Adrenal gland (tissue), 19 donors: ENCODE measurements at regions of chr20 and their contacts with region 1.

Region 1: GRCh38 chr20:9903048-9903655 is 64.3 kb upstream of the PAK5 start:
- DNase-seq: peak in 1 of 7 donors; percentile 6
- H3K4me3 ChIP-seq: no peak overlapping the region
- H3K27ac ChIP-seq: no peak overlapping the region
- H3K4me1 ChIP-seq: no peaks in the 10 kb centered on the region
- H3K27me3 ChIP-seq: no peaks in the 10 kb centered on the region
- CTCF ChIP-seq: peak in 3 of 6 experiments; percentile 6 to 27 (median 12)
- POLR2A ChIP-seq: no peak

Region 2: GRCh38 chr20:9407805-9408421 is 495.2 kb before region 1 on chr20:
- intact Hi-C with region 1: loop called in 1 of 2 experiments (anchors 10 kb)
- DNase-seq: peak; percentile 43 to 88 (median 68)
- H3K4me3 ChIP-seq: no peak overlapping the region
- H3K27ac ChIP-seq: no peak overlapping the region
- H3K4me1 ChIP-seq: no peaks in the 10 kb centered on the region
- H3K27me3 ChIP-seq: no peaks in the 10 kb centered on the region
- CTCF ChIP-seq: peak; percentile 86 to 92 (median 90)
- POLR2A ChIP-seq: no peak

Region 3: DNA sequence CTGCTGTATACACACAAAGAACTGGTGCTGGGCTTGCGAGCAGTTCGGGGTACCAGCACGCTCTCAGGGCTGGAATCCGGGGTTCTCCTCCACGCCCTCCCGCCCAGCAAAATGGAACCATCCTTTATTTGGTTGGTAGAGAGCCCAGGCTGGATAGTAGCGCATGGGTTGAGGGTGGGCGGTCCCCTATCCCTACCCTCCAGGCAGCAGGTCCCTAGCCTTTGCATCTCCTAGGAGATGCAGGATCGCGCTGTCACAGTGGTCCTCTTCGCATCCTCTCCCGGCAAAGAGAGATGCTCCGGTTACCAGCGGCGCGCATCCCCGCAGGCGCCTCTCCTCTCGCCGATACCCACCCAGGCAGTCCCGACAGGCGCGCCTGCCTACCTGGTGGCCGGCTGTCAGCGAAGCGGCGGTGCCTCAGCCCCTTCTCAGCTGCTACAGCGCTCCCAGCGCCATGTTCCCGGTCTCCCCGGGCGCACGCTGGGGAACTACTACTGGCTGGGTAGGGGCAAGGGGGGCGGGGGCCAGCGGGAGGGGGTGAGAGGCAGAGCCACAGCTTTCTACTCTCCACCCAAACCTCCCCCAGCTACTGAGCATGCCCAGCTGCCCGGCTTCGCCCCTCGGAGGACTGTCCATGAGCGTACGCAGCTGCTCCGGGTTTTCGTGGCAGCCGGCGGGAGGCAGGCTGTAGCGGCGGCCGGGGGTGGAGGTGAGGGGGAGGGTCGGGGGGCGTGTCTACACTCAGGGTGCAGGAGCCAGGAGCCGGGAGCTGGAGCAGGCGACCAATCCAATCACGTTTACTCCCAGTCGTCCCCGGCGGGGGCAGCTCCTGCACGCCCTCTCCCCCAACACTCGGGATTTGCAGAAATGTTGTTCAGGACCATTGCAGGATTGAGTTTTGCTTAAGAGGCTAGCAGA is 64.5 kb before region 1 on chr20 and contains the start of gene PAK5:
- intact Hi-C with region 1: loop called in 1 of 2 experiments (anchors 10 kb)
- DNase-seq: peak; percentile 84 to 90 (median 87)
- H3K4me3 ChIP-seq: peak within 1 kb of the TSS in 3 of 4 donors; percentile 25 to 64 (median 35)
- H3K27ac ChIP-seq: no peak within 1 kb of the TSS
- H3K4me1 ChIP-seq: peaks cover 0 to 4% of the 10 kb centered on the region in 2 donors
- H3K27me3 ChIP-seq: no peaks in the 10 kb centered on the region
- CTCF ChIP-seq: no peak
- POLR2A ChIP-seq: no peak
- total RNA-seq, gene PAK5: 1.4 to 8.8 (median 4.8) TPM